ENCODE measurements at regions of chr16 and their contacts with region 1.

Region 1: DNA sequence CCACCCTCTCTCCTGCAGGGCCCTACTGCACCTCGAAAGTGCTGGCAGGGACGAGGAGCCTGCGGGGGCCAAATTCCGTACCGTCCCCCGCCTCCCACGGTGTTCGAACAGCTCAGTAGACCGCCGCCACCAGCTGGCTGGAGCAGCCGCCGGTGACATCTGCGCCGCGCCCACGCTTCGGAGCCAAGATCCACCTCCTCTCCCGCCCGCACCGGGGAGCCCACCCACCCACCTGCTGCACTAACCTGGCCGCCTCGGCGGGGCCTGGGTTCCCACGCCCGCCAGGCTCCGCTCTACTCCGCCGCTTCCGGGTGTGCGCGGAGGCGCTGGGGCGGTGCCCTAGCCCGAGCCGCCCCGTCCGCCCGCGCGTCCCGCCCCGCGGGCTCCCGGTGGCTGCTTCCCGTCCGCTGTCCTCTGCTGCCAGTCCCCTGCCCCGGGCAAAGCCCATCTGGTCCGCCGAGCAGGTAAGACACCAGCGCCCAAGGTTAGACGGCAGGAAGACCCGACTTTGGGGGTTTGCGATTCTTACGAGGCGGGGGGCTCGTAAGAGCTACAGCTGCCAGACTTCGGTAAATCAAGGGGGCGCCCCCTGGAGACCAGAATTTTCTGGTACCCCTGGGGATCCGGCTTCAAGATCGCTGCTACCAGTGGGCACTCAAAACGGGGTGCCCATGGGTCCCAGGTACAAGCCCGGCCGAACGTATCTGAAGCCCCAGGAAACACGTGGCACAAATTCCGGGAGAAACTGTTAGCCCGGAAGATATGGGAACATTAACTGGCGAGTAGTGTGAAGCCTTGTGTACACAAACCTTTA is at the starts of genes FBXL8 and TRADD:
- DNase-seq: peak; percentile 71 to 84 (median 76)
- H3K4me3 ChIP-seq: peak within 1 kb of the TSS; percentile 74 to 92 (median 84)
- H3K27ac ChIP-seq: peak within 1 kb of the TSS in 1 of 2 experiments; percentile 64
- H3K4me1 ChIP-seq: peaks cover 3 to 63% (median 56%) of the 10 kb centered on the region in 4 experiments
- H3K27me3 ChIP-seq: peaks cover 6 to 51% (median 15%) of the 10 kb centered on the region in 5 experiments

Region 2: DNA sequence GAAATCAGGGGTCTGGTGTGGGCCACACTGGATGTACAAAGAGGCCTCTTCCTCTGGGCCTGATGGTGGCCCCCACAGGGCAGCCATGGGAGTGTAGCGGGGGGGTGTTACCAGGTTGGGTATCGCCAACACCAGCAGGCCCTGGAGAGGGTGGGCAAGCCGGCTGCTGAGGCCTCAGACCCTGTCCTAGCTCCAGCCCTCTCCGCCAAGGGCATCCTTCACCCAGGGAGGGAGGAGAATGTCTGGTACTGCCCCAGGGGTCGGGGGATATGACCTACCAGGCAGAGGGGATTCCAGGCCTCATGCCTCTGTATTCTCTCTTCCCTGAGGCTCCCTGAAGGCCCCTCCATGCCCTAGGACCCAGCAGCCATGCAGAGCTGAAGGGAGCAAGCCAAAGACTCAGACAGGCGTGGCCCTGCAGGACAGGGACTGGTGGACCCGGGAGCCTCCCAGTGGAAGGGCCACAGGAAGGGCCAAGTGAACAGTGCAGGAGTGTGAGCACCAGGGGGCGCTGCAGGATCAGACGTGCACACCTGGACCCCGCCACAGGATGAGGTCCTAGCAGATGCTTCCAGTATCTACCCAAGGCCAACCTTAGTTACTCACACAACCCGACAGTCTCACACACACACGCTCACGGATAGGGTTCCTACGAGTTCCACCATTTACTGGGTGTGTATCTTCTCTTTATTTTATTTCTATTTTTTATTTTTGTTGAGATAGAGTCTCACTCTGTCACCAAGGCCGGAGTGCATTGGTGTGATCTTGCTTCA is 182.3 kb before region 1 on chr16:
- CTCF ChIA-PET with region 1: interaction called, 11 read pairs
- POLR2A ChIA-PET with region 1: no interaction called
- DNase-seq: peak; percentile 75 to 90 (median 89)
- H3K4me3 ChIP-seq: no peak overlapping the region
- H3K27ac ChIP-seq: no peak overlapping the region
- H3K4me1 ChIP-seq: peaks cover 0 to 1% (median 0%) of the 10 kb centered on the region in 4 experiments
- H3K27me3 ChIP-seq: peaks cover 0 to 5% (median 0%) of the 10 kb centered on the region in 5 experiments

Region 3: GRCh38 chr16:67050796-67051195 is 109.0 kb before region 1 on chr16:
- CTCF ChIA-PET with region 1: no interaction called
- POLR2A ChIA-PET with region 1: no interaction called
- DNase-seq: no peak
- H3K4me3 ChIP-seq: no peak overlapping the region
- H3K27ac ChIP-seq: no peak overlapping the region
- H3K4me1 ChIP-seq: peaks cover 2 to 26% (median 15%) of the 10 kb centered on the region in 4 experiments
- H3K27me3 ChIP-seq: no peaks in the 10 kb centered on the region

Region 4: DNA sequence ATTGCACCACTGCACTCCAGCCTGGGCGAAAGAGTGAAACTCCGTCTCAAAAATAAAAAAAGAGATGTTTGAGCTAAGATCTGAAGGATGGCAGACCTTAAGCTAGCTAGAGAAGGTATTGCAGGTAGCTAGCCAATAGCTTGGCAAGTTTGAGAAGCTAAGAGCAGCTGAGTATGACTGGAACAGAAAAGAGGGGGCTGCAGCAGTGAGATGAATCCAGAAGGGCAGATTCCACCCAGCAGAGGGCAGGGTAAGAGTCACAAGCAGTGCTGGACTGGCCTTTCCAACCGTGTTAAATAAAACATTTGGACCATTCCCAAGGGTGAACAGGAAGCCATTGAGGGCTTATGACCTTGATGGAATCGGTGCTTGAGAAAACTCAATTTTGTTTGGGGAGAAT is 55.7 kb before region 1 on chr16:
- CTCF ChIA-PET with region 1: interaction called, 53 read pairs
- POLR2A ChIA-PET with region 1: no interaction called
- DNase-seq: peak; percentile 14 to 48 (median 45)
- H3K4me3 ChIP-seq: no peak overlapping the region
- H3K27ac ChIP-seq: no peak overlapping the region
- H3K4me1 ChIP-seq: peaks cover 2 to 8% (median 5%) of the 10 kb centered on the region in 4 experiments
- H3K27me3 ChIP-seq: no peaks in the 10 kb centered on the region

Region 5: GRCh38 chr16:67137605-67138004 is 22.2 kb before region 1 on chr16:
- CTCF ChIA-PET with region 1: interaction called, 37 read pairs
- POLR2A ChIA-PET with region 1: interaction called, 4 read pairs
- DNase-seq: no peak
- H3K4me3 ChIP-seq: no peak overlapping the region
- H3K27ac ChIP-seq: no peak overlapping the region
- H3K4me1 ChIP-seq: peaks cover 0 to 3% (median 0%) of the 10 kb centered on the region in 4 experiments
- H3K27me3 ChIP-seq: no peaks in the 10 kb centered on the region

Region 6: DNA sequence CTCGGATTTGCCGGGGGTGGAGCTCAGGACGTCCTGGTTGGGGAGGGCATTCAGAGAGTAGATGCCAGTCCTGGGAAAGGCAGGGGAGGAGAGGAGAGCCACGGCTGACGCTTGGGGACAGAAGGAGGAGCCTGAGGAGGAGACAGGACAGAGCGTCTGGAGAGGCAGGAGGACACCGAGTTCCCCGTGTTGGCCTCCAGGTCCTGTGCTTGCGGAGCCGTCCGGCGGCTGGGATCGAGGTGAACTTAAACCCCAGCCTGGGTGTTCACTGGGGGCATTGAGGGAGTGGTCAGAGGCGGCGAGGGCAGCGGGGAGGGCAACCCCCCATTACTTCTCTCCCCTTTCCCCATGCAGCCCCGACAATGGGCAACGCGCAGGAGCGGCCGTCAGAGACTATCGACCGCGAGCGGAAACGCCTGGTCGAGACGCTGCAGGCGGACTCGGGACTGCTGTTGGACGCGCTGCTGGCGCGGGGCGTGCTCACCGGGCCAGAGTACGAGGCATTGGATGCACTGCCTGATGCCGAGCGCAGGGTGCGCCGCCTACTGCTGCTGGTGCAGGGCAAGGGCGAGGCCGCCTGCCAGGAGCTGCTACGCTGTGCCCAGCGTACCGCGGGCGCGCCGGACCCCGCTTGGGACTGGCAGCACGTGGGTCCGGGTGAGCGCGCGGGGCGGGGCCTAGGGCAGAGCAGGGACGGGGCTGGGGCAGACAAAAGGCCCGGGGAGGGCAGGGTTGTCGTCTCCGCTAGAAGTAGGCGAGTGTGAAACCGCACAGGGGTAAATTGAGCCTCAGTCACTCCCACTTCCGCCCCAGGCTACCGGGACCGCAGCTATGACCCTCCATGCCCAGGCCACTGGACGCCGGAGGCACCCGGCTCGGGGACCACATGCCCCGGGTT is 14.3 kb after region 1 on chr16:
- CTCF ChIA-PET with region 1: interaction called, 34 read pairs
- POLR2A ChIA-PET with region 1: no interaction called
- DNase-seq: peak; percentile 80 to 91 (median 88)
- H3K4me3 ChIP-seq: peak overlapping the region; percentile 2 to 70 (median 37)
- H3K27ac ChIP-seq: no peak overlapping the region
- H3K4me1 ChIP-seq: peaks cover 0 to 49% (median 41%) of the 10 kb centered on the region in 4 experiments
- H3K27me3 ChIP-seq: peaks cover 4 to 86% (median 52%) of the 10 kb centered on the region in 5 experiments